ENCODE measurements at regions of chr7 and their contacts with region 1.

Region 1: DNA sequence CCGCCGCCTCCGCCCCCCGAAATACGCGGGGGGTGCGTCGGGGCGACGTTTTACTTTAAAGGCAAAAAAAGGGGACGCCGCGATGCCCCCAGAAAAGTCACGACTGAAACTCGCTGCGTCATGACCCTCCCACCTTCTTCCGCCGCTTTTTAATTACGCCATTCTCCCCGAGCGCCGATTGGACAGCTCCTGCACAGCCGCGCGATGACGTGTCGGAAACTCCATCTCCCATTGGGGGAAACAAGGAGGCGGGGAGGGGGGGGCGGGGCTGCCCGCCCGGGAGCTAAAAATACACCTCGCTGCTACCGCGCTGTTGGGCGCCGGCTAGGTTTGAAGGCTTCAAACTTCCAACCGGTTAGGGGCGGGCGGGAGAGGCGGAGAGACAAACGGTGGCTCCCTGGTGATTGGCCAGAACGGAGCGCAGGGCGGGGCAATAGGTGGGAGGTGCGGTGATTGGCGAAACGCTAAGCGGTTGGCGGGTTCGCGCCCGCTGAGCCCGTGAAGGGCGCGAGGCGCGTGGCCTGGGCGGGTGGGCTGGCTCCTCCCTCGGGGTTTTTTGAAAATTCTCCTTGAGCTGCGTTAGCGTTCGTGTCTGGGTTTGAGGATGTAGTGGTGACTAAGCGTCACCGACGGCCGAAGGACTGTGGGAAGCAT is at the start of gene RHEB:
- DNase-seq: peak; percentile 99
- total RNA-seq, gene RHEB: 119 to 138 TPM

Region 2: DNA sequence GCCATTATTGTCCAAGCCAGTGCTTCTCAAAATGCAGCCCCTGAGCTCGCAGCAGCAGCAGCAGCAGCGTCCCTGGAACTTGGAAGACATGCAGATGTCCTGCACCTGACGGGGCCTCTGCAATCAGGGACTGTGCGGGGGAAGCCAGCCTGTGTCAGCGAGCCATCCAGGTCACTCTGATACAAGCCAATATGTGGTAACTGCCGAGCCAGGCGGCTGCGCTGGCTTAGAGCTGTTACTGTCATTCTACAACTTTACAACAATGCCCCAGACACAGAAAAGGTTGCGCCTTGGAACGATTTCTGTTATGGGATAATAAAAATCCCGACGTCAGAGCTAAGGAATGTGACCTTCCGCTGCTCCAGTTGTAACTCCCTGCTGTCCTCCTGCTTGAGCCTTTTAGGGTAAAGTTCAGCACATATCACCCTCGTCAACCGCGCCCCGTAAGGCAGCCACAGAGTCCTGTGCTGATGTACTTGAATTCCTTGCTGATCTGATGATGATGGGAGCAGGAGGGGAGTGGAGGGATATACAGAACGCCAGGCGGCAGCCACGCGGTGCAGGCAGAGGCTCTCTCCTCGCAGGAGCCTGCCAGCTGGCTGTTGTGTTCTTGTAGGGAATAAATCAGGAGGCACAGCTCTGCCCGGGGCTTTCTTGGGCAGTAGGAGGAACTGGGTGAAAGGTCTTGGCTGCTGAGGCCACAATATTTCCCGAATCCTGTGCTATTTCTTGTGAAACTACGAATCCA is 60.0 kb before region 1 on chr7:
- intact Hi-C with region 1: loop called in 1 of 2 experiments (anchors 2 kb)
- DNase-seq: peak; percentile 94

Region 3: DNA sequence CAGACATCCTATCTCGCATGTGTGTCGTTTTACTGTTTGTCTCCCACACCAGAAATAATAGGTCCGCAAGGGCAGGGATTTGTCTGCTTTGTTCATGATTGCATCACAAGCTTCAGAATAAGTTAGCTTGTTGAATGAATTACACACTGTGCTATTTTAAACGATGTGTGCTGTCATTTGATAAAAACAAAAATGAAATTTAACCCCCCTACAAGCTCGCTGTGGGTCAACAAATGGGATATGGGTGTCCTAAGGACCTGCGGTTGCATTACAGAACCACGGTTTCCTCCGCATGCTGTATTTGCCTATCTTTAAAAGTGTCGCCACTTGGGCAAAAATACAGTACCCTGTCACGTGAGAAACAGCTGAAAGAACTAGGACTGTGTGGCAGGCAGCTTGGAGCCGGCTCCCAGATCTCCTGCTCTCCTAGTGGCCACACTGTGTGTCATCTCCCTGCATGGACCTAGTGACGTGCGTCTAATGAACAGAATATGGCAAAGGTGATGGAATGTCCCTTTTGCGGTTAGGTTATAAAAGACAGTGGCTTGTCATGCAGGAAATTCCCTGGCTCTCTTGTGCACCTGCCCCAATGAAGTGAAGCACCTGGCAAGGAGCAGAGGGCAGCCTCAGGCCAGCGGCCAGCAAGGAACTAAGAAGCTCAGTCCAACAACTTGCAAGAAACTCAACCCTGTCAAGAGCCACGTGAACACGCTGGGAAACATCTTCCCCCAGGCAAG is 47.1 kb before region 1 on chr7:
- intact Hi-C with region 1: no loop called
- DNase-seq: no peak

Region 4: DNA sequence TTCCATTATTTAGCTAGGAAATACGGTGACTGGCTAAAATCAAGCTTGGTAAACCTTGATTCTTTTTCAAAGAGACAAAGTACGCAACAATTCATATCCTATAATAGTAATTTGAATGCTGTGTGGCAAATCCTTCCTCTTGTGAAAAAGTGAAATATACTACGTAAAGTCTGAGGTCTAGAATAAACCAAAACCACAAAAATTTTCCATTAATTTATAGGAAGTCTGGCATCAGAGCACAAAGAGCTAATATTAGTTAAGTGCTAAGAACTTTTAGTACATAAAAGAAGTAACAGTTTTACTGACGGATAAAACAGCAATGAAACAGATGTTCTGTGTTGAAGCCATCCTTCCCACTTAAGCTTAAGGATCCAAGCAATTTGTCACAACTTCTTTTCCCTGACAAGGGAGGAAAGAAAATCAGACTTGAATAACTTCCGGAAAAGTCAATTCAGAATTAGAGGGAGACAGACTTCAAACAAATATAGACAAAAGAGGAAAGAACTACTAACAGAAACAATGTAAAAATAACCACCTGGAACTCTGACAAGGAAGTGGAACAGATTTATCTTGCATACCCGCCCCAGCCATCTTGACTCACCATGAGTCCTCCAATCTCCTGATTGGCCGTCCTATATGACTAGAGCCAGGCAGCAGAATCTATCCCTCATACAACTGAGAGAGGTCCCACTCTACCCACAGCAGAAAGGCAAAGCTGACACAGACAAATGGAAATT is 34.8 kb before region 1 on chr7:
- intact Hi-C with region 1: loop called in 1 of 2 experiments (anchors 2 kb)
- DNase-seq: no peak

Measured in posterior vena cava (tissue), 2 donors.